ENCODE measurements at regions of chr16 and their contacts with region 1.

Region 1: GRCh38 chr16:75234856-75235696 is 16.3 kb downstream of the CTRB1 start:
- DNase-seq: no peak
- H3K4me3 Mint-ChIP-seq: no peak overlapping the region
- H3K27ac Mint-ChIP-seq: no peak overlapping the region
- H3K4me1 Mint-ChIP-seq: peaks cover 6% of the 10 kb centered on the region
- H3K27me3 Mint-ChIP-seq: no peaks in the 10 kb centered on the region

Region 2: DNA sequence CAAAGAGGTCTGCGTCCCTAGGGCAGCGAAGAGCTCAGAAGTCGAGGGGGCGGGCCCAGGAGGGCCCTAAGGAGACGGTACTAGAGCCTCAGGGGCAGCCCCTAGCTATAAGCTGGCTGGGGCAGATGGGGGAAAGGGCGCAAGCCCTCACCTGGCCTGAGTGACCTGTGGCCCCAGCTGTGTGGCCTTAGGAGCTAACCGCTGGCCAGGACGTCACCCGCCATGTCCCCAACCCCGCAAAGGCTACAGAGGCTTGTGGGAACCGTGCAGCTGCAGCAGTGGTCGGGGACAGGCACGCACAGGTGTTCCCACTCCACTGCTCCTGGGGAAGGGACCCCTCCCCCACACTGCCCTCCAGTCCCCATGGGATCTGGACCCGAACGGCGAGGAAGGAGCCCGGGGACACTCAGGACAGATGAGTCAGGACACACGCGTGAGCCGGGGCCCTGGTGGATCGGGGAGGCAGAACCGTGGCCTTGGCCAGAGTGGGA is 26.1 kb before region 1 on chr16:
- CTCF ChIA-PET with region 1: interaction called, 10 read pairs
- intact Hi-C with region 1: no loop called
- DNase-seq: no peak
- H3K4me3 Mint-ChIP-seq: no peak overlapping the region
- H3K27ac Mint-ChIP-seq: no peak overlapping the region
- H3K4me1 Mint-ChIP-seq: no peaks in the 10 kb centered on the region
- H3K27me3 Mint-ChIP-seq: no peaks in the 10 kb centered on the region

Region 3: DNA sequence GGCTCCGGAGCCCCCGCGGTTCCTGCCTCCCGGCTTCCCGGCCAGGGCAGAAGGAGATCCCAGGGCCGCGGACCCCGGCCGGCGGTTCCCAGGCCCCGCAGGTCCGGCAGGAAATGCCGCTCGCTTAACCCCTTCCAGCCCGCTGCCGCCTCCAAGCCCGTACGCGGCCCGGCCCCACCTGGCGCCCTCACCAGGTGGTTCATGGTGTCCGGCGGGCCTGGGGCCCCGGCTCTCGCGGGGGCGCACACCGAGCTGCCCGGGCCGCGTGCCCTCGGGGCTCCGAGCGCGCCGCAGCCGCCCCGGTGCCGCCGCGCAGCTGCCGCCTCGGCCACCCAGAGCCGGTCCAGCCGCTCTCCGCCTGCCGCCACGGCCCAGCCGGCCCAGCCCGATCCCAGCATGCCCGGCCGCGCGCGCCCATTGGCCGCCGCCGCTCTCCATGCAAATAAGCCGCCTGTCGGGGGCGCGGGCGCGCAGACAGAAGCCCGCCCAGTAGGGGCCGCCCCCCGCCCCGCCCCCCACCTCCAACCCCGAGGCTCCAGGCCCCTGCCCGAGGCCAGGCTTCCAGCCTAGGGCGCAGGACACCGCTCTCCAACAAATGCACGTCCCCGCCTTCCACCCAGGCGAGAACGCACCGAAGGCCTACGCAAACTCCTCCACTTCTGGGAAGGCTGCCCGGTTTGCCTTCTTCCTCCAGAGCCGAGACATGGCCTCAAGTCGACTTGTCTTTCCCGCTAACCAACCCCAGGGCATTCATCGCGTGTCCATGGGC is 16.4 kb after region 1 on chr16 and contains the start of gene BCAR1:
- CTCF ChIA-PET with region 1: interaction called, 12 read pairs
- intact Hi-C with region 1: no loop called
- DNase-seq: peak; percentile 22
- H3K4me3 Mint-ChIP-seq: peak within 1 kb of the TSS; percentile 64
- H3K27ac Mint-ChIP-seq: no peak within 1 kb of the TSS
- H3K4me1 Mint-ChIP-seq: peaks cover 3% of the 10 kb centered on the region
- H3K27me3 Mint-ChIP-seq: peaks cover 31% of the 10 kb centered on the region
- total RNA-seq, gene BCAR1: 0.67 to 0.81 TPM

Region 4: DNA sequence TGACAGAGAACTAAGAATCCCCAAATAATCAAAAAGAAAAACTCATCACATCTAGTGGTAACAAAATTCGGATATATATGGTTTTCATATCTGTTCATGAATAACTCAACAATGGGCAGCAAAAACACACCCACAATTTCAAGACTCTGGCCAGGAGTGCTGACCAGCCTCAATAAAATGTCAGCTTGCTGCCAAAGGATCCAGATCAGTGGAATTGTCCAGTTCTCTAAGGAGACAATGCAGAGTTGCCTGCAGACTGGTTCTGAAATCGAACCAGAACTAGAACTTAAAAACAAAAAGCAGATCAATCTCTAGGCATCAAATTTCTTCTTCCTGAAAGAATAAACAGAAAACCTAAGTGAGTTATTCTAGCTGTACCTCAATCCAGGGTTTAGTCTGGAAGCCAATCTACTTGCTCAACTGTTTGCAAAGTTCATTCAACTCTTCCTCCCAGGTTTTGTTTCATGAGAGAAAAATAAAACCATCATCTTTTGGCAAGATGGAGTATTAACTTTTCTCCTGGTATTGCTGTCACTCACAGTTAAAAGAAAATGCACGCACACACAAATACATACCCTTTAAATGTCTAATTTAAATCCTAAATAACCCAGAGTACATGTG is 137.3 kb after region 1 on chr16:
- CTCF ChIA-PET with region 1: interaction called, 20 read pairs
- intact Hi-C with region 1: no loop called
- DNase-seq: no peak
- H3K4me3 Mint-ChIP-seq: no peak overlapping the region
- H3K27ac Mint-ChIP-seq: no peak overlapping the region
- H3K4me1 Mint-ChIP-seq: peaks cover under 1% of the 10 kb centered on the region
- H3K27me3 Mint-ChIP-seq: no peaks in the 10 kb centered on the region

Region 5: DNA sequence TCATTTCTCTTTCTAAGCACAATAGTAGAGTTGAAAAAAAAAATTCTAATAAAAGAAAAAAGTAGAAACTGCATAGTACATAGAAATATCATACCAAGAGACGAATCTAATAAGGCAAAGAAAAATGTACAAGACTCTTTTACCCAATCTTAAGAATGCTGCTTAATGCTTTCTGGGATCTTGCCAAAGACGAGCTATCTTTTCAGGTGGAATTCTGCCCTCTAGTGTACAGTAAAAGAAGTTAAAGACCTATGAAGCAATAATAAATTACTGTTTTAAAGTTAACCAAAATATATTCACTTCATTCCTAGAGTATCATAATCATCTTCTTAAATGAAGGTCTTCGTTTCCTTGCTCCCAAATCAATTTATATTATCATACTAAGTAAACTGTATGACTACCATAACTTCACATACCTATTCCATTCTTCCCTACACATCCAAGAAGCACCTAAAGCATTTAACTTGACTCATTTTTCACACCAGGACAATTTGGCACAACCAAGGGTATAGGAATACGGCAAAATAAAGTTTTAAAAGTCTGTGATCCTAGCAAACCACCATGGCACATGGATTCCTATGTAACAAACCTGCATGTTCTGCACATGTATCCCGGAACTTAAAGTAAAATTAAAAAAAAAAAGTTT is 150.6 kb after region 1 on chr16:
- CTCF ChIA-PET with region 1: interaction called, 58 read pairs
- intact Hi-C with region 1: loop called (anchors 1 kb)
- DNase-seq: no peak
- H3K4me3 Mint-ChIP-seq: no peak overlapping the region
- H3K27ac Mint-ChIP-seq: no peak overlapping the region
- H3K4me1 Mint-ChIP-seq: peaks cover 19% of the 10 kb centered on the region
- H3K27me3 Mint-ChIP-seq: peaks cover 2% of the 10 kb centered on the region

Region 6: GRCh38 chr16:75402821-75403475 is 167.9 kb after region 1 on chr16:
- CTCF ChIA-PET with region 1: interaction called, 13 read pairs
- intact Hi-C with region 1: loop called (anchors 1 kb)
- DNase-seq: no peak
- H3K4me3 Mint-ChIP-seq: no peak overlapping the region
- H3K27ac Mint-ChIP-seq: no peak overlapping the region
- H3K4me1 Mint-ChIP-seq: peaks cover 27% of the 10 kb centered on the region
- H3K27me3 Mint-ChIP-seq: no peaks in the 10 kb centered on the region